ENCODE measurements at regions of chr12 and their contacts with region 1.

Region 1: DNA sequence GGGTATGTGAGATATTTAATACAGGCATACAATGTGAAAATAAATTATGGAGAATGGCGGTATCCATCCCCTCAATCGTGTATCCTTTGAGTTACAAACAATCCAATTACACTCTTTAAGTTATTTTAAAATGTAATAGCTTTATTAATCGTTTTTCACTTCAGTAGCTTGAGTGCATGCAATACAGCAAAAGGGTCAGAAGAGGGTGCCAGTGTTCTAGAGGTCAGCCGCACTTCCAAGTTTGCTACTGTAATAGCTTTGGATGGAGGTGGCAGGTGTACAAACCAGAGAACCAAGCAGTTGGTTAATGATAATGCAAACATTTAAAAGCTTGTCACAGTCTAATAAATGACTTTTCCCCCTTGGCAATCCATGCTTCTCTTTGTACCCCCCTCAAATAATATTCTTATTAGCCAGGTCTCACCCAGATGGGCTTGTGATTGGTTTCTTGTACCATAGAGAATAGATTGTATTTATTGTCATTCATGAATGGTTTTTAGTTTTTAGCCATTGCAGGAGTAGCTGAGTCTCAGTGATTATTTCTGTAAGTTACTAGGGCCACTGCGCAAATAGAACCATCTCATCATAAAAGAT is 127.0 kb downstream of the ERC1 start:
- DNase-seq: peak; percentile 80
- ATAC-seq: peak; percentile 25; the same call in 1 of the 2 replicates
- H3K4me3 ChIP-seq: no peak overlapping the region
- H3K27ac ChIP-seq: no peak overlapping the region
- H3K4me1 ChIP-seq: peaks cover 43% of the 10 kb centered on the region
- H3K27me3 ChIP-seq: no peaks in the 10 kb centered on the region
- CTCF ChIP-seq: peak; percentile 87

Region 2: DNA sequence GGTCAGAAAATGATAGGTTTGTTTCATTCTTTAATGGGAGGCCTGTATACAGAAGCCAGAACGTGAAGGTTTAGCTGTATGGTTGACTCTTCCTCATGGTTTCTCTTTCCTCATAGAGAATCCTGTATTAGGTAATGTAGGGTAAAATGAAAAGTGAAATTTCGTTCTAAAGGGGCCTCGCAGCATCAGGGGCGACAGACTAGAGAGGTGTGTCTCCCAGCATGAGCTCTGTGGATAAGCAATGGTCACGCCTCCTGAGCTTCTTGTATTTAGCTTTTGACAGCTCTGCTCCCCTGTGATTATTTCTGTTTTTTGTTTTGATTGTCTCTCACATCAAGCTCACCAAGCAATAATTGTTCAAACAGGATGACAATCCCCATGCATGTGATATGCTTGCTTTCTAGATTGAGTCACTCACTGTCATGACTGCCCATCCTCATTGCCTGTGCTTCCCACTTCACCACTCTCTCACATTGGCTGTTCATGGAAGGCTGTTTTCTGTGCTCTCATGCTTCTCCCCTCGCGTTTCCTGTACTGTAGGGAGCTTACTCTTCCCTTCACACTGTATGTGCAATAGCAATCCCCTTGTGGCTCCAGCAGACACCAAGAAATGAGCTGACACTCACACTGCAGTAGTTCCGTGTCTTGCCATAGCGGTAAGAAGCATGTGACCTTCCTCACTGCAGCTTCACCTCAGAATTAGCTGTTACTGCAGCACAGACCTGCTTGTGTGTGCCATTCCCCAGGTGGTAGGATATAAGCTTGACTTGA is 212.6 kb before region 1 on chr12:
- CTCF ChIA-PET with region 1: no interaction called
- POLR2A ChIA-PET with region 1: no interaction called
- intact Hi-C with region 1: no loop called
- DNase-seq: no peak
- ATAC-seq: no peak
- H3K4me3 ChIP-seq: no peak overlapping the region
- H3K27ac ChIP-seq: no peak overlapping the region
- H3K4me1 ChIP-seq: no peaks in the 10 kb centered on the region; the same call in 1 of the 2 replicates
- H3K27me3 ChIP-seq: no peaks in the 10 kb centered on the region
- CTCF ChIP-seq: no peak

Region 3: GRCh38 chr12:963724-964123 is 154.3 kb before region 1 on chr12:
- CTCF ChIA-PET with region 1: no interaction called
- POLR2A ChIA-PET with region 1: no interaction called
- intact Hi-C with region 1: no loop called
- DNase-seq: no peak
- ATAC-seq: no peak
- H3K4me3 ChIP-seq: no peak overlapping the region
- H3K27ac ChIP-seq: no peak overlapping the region
- H3K4me1 ChIP-seq: no peaks in the 10 kb centered on the region
- H3K27me3 ChIP-seq: no peaks in the 10 kb centered on the region
- CTCF ChIP-seq: no peak

Region 4: GRCh38 chr12:1047898-1048660 is 70.0 kb before region 1 on chr12:
- CTCF ChIA-PET with region 1: no interaction called
- POLR2A ChIA-PET with region 1: no interaction called
- intact Hi-C with region 1: no loop called
- DNase-seq: no peak
- ATAC-seq: no peak
- H3K4me3 ChIP-seq: no peak overlapping the region
- H3K27ac ChIP-seq: no peak overlapping the region
- H3K4me1 ChIP-seq: peaks cover 67% of the 10 kb centered on the region
- H3K27me3 ChIP-seq: no peaks in the 10 kb centered on the region
- CTCF ChIP-seq: no peak

Region 5: DNA sequence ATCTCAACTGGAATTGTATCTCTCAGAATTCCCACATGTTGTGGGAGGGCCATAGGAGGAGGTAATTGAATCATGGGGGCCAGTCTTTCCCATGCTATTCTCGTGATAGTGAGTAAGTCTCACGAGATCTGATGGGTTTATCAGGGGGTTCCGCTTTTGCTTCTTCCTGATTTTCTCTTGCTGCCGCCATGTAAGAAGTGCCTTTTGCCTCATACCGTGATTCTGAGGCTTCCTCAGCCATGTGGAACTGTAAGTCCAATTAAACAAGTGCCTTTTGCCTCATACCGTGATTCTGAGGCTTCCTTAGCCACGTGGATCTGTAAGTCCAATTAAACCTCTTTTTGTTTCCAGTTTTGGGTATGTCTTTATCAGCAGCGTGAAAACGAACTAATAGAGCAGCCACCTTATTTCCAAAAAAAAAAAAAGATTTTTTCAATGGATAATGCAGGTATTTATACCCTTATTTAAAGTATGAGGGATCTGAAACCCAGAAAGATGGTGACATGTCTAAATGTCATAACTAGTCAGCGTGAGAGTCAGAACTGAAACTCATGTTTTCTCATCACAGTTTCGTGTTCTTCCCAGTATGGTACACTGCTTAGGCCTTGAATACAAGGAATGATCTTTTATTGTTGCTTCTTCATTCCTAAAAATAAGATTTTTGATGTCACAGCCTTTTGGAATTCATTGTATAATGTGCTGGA is 37.4 kb before region 1 on chr12:
- CTCF ChIA-PET with region 1: no interaction called
- POLR2A ChIA-PET with region 1: no interaction called
- intact Hi-C with region 1: no loop called
- DNase-seq: no peak
- ATAC-seq: no peak
- H3K4me3 ChIP-seq: no peak overlapping the region
- H3K27ac ChIP-seq: no peak overlapping the region
- H3K4me1 ChIP-seq: no peaks in the 10 kb centered on the region
- H3K27me3 ChIP-seq: no peaks in the 10 kb centered on the region
- CTCF ChIP-seq: no peak

Region 6: DNA sequence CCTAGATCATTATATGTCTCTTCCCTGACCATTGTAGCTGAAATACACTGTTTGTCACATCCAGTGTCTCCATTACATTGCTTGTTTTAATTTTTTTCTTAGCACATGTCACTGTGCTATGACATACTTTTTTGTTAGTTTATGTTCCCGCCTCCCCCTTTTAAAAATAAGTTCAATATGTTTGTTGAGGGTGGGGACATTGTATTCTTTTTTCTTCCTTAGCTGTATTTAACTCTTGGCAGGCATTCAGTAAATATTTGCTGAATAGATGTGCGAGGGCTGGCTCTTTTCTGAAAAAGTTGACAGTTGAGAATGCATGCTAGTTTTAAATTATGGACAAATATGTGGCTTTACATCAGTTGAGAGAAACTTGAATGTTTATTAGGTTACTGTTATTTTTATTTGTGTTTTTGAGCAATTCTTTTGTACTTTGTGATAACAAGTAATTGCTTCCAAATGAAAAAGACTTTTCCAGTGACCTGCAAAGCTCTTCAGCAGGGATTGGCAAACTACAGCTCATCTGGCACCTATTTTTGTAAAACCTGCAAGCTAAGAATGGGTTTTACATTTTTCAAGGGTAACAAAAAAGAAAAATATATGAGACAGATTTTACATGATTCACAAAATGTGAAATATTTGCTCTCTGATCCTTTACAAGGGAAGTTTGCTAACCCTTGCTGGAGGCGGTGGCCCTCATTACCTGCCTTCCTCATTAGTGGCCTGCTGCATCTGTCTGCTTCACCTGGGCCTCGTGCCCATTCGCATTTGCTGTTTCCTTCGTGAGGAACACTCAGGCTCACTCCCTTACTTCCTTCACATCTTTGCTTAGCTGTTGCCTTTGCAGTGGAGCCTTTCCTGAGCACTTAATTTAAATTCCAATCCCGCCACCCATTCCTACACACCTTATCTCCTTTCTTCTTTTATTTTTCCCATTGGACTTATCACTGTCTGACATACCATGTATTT is 102.3 kb after region 1 on chr12:
- CTCF ChIA-PET with region 1: interaction called, 6 read pairs
- POLR2A ChIA-PET with region 1: no interaction called
- intact Hi-C with region 1: loop called (anchors 5 kb)
- DNase-seq: peak; percentile 73
- ATAC-seq: peak; percentile 42
- H3K4me3 ChIP-seq: no peak overlapping the region
- H3K27ac ChIP-seq: peak overlapping the region; percentile 90
- H3K4me1 ChIP-seq: peaks cover 63% of the 10 kb centered on the region
- H3K27me3 ChIP-seq: no peaks in the 10 kb centered on the region
- CTCF ChIP-seq: no peak

Region 7: DNA sequence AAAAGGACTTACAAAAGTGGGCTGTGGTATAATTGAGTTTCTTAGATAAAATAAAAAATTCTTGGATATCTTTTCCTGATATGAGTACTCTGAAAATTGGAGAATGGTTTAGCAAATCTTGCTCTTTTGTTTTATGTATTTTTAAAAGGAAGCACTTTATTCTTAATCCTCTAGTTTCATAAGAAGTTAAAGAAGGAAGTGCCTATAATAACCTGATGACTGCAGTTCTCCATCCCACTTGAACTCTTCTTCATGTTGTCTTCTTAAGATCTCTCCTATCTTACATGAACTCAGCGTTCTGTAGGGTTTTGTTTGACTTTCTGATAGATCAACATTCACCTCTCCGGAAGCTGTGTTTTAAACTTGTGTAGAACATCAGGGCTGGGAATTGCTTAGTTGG is 143.9 kb after region 1 on chr12:
- CTCF ChIA-PET with region 1: interaction called, 10 read pairs
- POLR2A ChIA-PET with region 1: no interaction called
- intact Hi-C with region 1: no loop called
- DNase-seq: no peak
- ATAC-seq: no peak
- H3K4me3 ChIP-seq: no peak overlapping the region
- H3K27ac ChIP-seq: no peak overlapping the region
- H3K4me1 ChIP-seq: no peaks in the 10 kb centered on the region
- H3K27me3 ChIP-seq: no peaks in the 10 kb centered on the region
- CTCF ChIP-seq: no peak

Region 8: DNA sequence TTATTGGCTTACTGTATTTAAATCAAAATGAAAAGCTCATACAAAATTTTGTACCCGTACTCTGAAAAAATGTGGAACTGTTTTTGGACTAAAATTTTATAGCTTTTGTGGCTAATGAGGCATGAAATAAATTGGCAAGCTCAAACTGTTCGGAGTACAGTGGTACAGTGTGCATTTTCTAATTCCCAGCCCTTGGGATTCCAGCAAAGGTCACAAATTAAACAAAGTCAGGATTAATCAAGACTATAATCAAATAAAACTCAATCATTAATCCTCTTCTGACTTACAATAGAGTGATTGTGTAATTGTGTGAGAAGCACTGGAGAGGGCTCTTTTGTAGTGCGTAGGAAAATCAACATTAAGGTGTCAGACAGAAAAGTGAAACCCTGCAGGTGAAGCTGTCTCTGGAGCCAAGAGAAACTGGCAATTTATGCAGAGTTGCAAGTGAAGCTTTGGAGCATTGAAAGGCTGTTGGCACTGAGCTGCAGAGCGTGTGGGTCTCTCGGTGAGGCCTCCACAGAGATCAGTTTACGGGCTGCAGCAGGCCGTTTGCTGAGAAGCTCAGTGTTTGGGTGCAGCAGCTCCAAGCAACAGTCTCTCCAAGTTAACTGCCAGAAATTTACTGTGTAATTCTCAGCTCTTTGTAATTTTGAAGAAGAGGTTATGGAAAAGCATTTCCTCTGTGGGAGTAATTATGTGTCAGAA is 200.4 kb after region 1 on chr12:
- CTCF ChIA-PET with region 1: no interaction called
- POLR2A ChIA-PET with region 1: no interaction called
- intact Hi-C with region 1: loop called (anchors 10 kb)
- DNase-seq: peak; percentile 62
- ATAC-seq: peak; percentile 87
- H3K4me3 ChIP-seq: peak overlapping the region; percentile 53
- H3K27ac ChIP-seq: peak overlapping the region; percentile 78
- H3K4me1 ChIP-seq: peaks cover 20% of the 10 kb centered on the region
- H3K27me3 ChIP-seq: no peaks in the 10 kb centered on the region
- CTCF ChIP-seq: no peak

Region 9: GRCh38 chr12:1474041-1474573 is 356.0 kb after region 1 on chr12:
- CTCF ChIA-PET with region 1: no interaction called
- POLR2A ChIA-PET with region 1: no interaction called
- intact Hi-C with region 1: loop called (anchors 5 kb)
- DNase-seq: peak; percentile 95
- ATAC-seq: peak; percentile 89
- H3K4me3 ChIP-seq: peak overlapping the region; percentile 55
- H3K27ac ChIP-seq: peak overlapping the region; percentile 95
- H3K4me1 ChIP-seq: peaks cover 33% of the 10 kb centered on the region
- H3K27me3 ChIP-seq: no peaks in the 10 kb centered on the region
- CTCF ChIP-seq: no peak

Region 10: GRCh38 chr12:1583421-1584078 is 465.5 kb after region 1 on chr12:
- CTCF ChIA-PET with region 1: interaction called, 32 read pairs
- POLR2A ChIA-PET with region 1: interaction called, 9 read pairs
- intact Hi-C with region 1: loop called (anchors 1 kb)
- DNase-seq: peak; percentile 83
- ATAC-seq: peak; percentile 51
- H3K4me3 ChIP-seq: peak overlapping the region; percentile 38; the same call in 1 of the 2 replicates
- H3K27ac ChIP-seq: no peak overlapping the region
- H3K4me1 ChIP-seq: peaks cover 11% of the 10 kb centered on the region
- H3K27me3 ChIP-seq: no peaks in the 10 kb centered on the region
- CTCF ChIP-seq: peak; percentile 93

Measured in PC-3 (cell line).